CD8-positive, alpha-beta T cell (primary cell): ENCODE measurements at regions of chr2 and their contacts with region 1.

Region 1: DNA sequence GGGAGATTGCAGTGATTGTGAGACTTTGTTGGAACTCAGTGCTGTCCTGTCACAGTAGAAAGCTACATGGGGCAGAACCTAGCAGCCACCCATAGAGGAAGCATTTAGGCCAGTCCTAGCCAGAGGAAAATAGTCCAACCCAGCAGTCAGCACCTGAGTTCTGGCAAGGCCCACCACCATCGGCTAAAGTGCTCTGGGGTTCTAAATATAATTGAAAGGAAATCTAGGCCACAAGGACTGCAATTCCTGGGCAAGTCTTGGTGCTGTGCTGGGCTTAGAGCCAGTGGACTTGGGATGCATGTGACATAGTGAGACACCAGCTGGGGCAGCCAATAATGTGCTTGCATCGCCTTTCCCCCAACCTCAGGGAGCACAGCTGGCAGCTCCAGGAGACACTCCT is 28.9 kb upstream of the ACTR2 start:
- DNase-seq: no peak
- ATAC-seq: no peak
- H3K4me3 ChIP-seq: no peak overlapping the region
- H3K4me3 Mint-ChIP-seq: no peak overlapping the region
- H3K27ac ChIP-seq: no peak overlapping the region
- H3K27ac Mint-ChIP-seq: no peak overlapping the region
- H3K4me1 ChIP-seq: no peaks in the 10 kb centered on the region
- H3K4me1 Mint-ChIP-seq: no peaks in the 10 kb centered on the region
- H3K27me3 ChIP-seq: no peaks in the 10 kb centered on the region
- H3K27me3 Mint-ChIP-seq: no peaks in the 10 kb centered on the region
- CTCF ChIP-seq: no peak

Region 2: GRCh38 chr2:65186872-65187851 is 11.6 kb before region 1 on chr2:
- CTCF ChIA-PET with region 1: interaction called, 13 read pairs
- POLR2A ChIA-PET with region 1: no interaction called
- intact Hi-C with region 1: no loop called
- DNase-seq: peak; percentile 35 to 74 (median 63)
- ATAC-seq: peak; percentile 88
- H3K4me3 ChIP-seq: no peak overlapping the region
- H3K4me3 Mint-ChIP-seq: no peak overlapping the region
- H3K27ac ChIP-seq: no peak overlapping the region
- H3K27ac Mint-ChIP-seq: no peak overlapping the region
- H3K4me1 ChIP-seq: peaks cover 6% of the 10 kb centered on the region
- H3K4me1 Mint-ChIP-seq: peaks cover 9% of the 10 kb centered on the region
- H3K27me3 ChIP-seq: no peaks in the 10 kb centered on the region
- H3K27me3 Mint-ChIP-seq: peaks cover 10% of the 10 kb centered on the region
- CTCF ChIP-seq: peak; percentile 60